A673 (cell line): ENCODE measurements at regions of chr12 and their contacts with region 1.

Region 1: DNA sequence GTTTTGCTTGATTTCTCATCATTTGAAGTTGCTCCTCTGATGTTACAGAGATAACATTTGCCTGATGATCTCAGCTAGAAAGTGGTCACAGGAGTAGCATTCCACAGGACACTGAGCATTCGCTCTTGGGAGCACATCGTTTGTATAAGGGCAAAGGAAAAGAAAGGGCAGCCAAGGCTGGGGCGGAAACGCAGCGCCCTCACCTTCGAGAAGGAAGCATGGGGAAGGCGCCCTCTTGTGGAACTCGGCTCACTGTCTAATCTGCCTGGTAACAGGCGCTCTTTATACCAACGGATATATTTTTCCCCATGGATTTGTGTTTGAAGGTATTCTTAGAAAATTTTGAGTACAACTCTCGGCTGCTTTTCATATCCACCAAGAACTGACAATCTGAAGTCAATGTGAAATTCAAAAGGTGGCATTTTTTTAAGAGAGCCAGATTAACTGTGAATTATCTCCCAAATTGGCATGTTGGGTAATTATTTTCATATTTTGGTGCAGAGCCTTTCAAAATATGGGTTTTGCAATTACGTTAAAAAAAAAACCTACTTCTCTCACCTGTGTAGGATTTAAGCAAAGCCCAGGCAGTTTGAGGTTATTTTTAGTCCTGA is 172.7 kb downstream of the CAND1 start:
- DNase-seq: peak; percentile 82
- H3K4me3 ChIP-seq: no peak overlapping the region
- H3K27ac ChIP-seq: no peak overlapping the region
- H3K4me1 ChIP-seq: no peaks in the 10 kb centered on the region
- H3K27me3 ChIP-seq: no peaks in the 10 kb centered on the region
- CTCF ChIP-seq: peak; percentile 91

Region 2: GRCh38 chr12:67943226-67943892 is 501.5 kb after region 1 on chr12:
- CTCF ChIA-PET with region 1: interaction called, 3 read pairs
- POLR2A ChIA-PET with region 1: no interaction called
- intact Hi-C with region 1: loop called (anchors 5 kb)
- DNase-seq: peak; percentile 71
- H3K4me3 ChIP-seq: no peak overlapping the region
- H3K27ac ChIP-seq: no peak overlapping the region
- H3K4me1 ChIP-seq: no peaks in the 10 kb centered on the region
- H3K27me3 ChIP-seq: peaks cover 21% of the 10 kb centered on the region
- CTCF ChIP-seq: peak; percentile 76